ENCODE measurements at regions of chr15 and their contacts with region 1.

Region 1: GRCh38 chr15:58227706-58228543 is 89.7 kb downstream of the AQP9 start:
- DNase-seq: peak; percentile 48 to 69
- H3K4me3 ChIP-seq: no peak overlapping the region
- H3K27ac ChIP-seq: peak overlapping the region; percentile 32; the same call in 1 of the 2 replicates
- H3K4me1 ChIP-seq: peaks cover 25% of the 10 kb centered on the region
- H3K27me3 ChIP-seq: no peaks in the 10 kb centered on the region
- CTCF ChIP-seq: peak; percentile 87

Region 2: DNA sequence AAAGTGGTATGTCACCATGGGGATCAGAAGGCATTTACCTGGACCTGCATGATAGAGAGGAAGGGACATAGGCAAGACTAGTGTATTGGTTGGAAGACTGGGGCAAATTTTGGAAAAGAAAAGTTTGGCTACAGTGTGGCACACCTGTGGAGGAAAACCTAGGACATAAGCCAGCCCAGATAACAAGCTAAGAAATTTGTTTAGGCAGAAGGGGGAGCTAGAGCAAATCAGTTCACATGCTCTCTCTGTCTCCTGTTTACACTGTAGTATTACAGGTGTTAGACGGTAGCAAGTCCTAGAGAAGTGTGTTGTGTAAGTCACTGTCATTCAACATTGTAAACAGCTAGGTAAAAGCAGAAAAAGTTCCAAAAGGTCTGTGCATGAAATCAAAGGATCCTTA is 150.5 kb before region 1 on chr15:
- CTCF ChIA-PET with region 1: no interaction called
- POLR2A ChIA-PET with region 1: no interaction called
- intact Hi-C with region 1: no loop called
- DNase-seq: no peak
- H3K4me3 ChIP-seq: no peak overlapping the region
- H3K27ac ChIP-seq: no peak overlapping the region
- H3K4me1 ChIP-seq: no peaks in the 10 kb centered on the region
- H3K27me3 ChIP-seq: no peaks in the 10 kb centered on the region
- CTCF ChIP-seq: no peak; the same call in 1 of the 2 replicates

Region 3: GRCh38 chr15:58165661-58166060 is 62.3 kb before region 1 on chr15:
- CTCF ChIA-PET with region 1: no interaction called
- POLR2A ChIA-PET with region 1: no interaction called
- intact Hi-C with region 1: no loop called
- DNase-seq: no peak
- H3K4me3 ChIP-seq: no peak overlapping the region
- H3K27ac ChIP-seq: no peak overlapping the region
- H3K4me1 ChIP-seq: no peaks in the 10 kb centered on the region
- H3K27me3 ChIP-seq: no peaks in the 10 kb centered on the region
- CTCF ChIP-seq: no peak

Region 4: GRCh38 chr15:58247855-58248766 is 20.2 kb after region 1 on chr15:
- CTCF ChIA-PET with region 1: no interaction called
- POLR2A ChIA-PET with region 1: no interaction called
- intact Hi-C with region 1: no loop called
- DNase-seq: no peak
- H3K4me3 ChIP-seq: no peak overlapping the region
- H3K27ac ChIP-seq: no peak overlapping the region
- H3K4me1 ChIP-seq: no peaks in the 10 kb centered on the region; the same call in 1 of the 2 replicates
- H3K27me3 ChIP-seq: no peaks in the 10 kb centered on the region
- CTCF ChIP-seq: no peak

Region 5: GRCh38 chr15:58260911-58261267 is 33.0 kb after region 1 on chr15:
- CTCF ChIA-PET with region 1: no interaction called
- POLR2A ChIA-PET with region 1: interaction called, 4 read pairs
- intact Hi-C with region 1: loop called (anchors 2 kb)
- DNase-seq: peak; percentile 48 to 83
- H3K4me3 ChIP-seq: 0 out of 2 replicates have a peak overlapping the region, but pooled peaks have one; percentile 27
- H3K27ac ChIP-seq: peak overlapping the region; percentile 98
- H3K4me1 ChIP-seq: peaks cover 46% of the 10 kb centered on the region
- H3K27me3 ChIP-seq: no peaks in the 10 kb centered on the region
- CTCF ChIP-seq: no peak

Region 6: DNA sequence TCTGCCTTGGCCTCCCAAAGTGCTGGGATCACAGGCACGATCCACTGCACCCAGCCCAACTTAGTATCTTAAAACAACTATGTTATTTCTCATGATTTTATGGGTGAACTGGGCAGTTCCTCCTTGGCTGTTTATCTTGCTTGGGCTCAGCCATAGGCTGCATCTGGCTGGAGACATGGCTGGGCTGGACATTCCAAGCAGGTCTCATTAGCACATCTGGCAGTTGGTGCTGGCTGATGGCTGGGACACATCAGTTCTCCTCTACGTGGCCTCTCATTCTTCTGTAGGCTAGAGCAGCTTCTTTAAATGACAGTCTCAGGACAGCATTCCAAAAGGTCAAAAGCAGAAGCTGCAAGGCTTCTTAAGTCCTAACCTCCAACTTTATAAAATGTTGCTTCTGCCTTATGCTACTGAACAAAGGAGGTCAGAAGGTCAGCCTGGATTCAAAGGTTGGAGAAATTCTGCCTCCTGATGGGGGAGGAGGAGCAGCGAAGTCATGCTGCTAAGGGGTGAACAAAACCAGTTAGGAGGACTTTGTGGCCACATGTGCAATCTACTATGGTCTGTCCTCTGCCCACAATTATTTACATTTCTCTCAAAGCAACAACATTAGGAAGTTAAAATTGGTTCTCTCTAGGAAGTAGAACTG is 54.3 kb after region 1 on chr15:
- CTCF ChIA-PET with region 1: no interaction called
- POLR2A ChIA-PET with region 1: no interaction called
- intact Hi-C with region 1: no loop called
- DNase-seq: no peak
- H3K4me3 ChIP-seq: no peak overlapping the region
- H3K27ac ChIP-seq: no peak overlapping the region
- H3K4me1 ChIP-seq: 0 out of 2 replicates have a peak, but pooled peaks cover 4% of the 10 kb centered on the region
- H3K27me3 ChIP-seq: no peaks in the 10 kb centered on the region
- CTCF ChIP-seq: no peak

Region 7: DNA sequence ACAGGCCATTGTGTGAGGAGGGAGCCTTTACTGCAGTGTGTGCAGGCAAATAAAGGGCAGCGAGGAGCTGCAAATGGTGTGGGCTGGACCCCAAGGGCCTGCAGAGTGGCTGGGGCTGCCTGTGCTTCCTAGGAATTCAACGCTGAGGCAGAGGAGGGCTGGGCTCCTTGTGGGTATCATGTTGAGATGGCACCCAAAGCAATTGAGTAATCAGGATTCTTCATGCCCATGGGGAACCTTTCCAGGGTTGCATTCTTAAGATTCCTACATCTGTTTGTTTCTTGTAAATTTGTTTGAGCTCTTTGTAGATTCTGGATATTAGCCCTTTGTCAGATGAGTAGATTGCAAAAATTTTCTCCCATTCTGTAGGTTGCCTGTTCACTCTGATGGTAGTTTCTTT is 118.5 kb after region 1 on chr15:
- CTCF ChIA-PET with region 1: no interaction called
- POLR2A ChIA-PET with region 1: interaction called, 6 read pairs
- intact Hi-C with region 1: loop called (anchors 5 kb)
- DNase-seq: peak; percentile 84 to 91
- H3K4me3 ChIP-seq: no peak overlapping the region
- H3K27ac ChIP-seq: peak overlapping the region; percentile 51
- H3K4me1 ChIP-seq: peaks cover 23% of the 10 kb centered on the region
- H3K27me3 ChIP-seq: no peaks in the 10 kb centered on the region
- CTCF ChIP-seq: no peak

Region 8: DNA sequence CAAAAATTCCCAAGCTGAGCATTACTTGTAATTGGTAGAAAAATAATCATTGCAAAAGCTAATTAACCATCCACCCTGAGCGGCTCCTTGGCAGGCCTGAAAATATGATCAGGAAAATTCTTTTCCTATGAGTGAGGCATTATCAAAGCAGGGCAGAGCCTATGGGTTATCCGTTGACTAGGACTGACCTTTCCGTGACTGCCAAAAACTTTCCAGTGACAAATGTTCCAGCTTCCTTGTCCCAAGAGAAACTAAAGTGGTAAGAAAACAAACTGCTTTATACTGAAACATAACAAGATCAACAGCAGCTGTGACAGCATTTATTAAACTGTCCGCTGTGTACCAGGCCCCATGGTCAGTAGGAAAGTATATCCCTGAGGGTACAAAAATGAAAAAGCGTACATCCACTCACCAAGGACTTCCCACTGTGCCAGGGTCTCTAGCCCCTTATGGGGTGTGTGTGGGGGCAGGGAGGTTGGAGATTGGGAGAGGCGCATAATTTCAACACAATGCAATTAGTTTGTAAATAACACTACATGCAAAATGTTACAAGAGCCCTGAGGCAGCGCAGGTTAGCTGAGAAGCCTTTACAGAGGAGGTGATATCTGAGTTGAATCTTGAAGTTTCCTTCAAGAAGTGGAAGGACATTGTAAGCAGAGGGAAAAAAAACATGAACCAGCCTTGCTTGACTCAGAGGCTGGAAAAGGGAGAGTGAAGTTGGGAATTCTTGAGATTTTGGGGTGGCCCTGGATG is 212.4 kb after region 1 on chr15:
- CTCF ChIA-PET with region 1: no interaction called
- POLR2A ChIA-PET with region 1: no interaction called
- intact Hi-C with region 1: loop called (anchors 1 kb)
- DNase-seq: peak; percentile 43 to 94
- H3K4me3 ChIP-seq: peak overlapping the region; percentile 41; the same call in 1 of the 2 replicates
- H3K27ac ChIP-seq: peak overlapping the region; percentile 100
- H3K4me1 ChIP-seq: peaks cover 65% of the 10 kb centered on the region
- H3K27me3 ChIP-seq: no peaks in the 10 kb centered on the region
- CTCF ChIP-seq: no peak

Region 9: DNA sequence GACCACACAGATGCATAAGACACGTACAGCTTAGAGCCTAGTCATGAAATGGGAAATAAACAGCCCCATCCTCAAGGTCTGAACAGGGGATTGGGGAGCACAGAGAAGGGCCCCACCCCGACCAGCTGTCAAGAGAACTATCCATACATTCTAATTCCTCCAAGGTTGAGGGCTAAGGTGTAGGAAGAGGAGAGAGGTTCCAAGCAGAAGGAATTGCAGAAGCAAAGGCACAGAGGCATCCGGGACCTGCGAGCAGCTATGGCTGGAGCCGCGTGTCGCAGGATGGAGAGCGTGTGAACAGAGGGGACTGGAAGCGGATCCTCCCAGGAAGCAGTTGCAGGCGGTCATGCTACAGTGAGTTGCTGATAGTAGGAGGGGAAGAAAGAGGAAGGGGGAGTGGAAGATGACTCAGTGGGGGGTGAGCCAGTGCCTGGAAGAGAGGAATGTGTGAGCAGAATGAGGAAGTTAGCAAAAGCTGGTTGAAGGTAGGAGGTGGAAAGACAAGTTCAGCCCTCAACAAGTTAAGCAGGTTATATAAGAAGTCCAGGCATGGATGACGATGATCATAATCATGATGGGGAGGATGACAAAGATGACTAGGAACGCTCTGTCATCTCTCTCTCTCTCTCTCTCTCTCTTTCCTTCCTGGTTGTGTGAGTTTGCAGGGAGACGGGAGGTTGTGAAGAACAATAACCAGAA is 293.5 kb after region 1 on chr15:
- CTCF ChIA-PET with region 1: no interaction called
- POLR2A ChIA-PET with region 1: no interaction called
- intact Hi-C with region 1: loop called (anchors 5 kb)
- DNase-seq: peak; percentile 89 to 98
- H3K4me3 ChIP-seq: peak overlapping the region; percentile 49; the same call in 1 of the 2 replicates
- H3K27ac ChIP-seq: peak overlapping the region; percentile 97
- H3K4me1 ChIP-seq: peaks cover 50% of the 10 kb centered on the region
- H3K27me3 ChIP-seq: no peaks in the 10 kb centered on the region
- CTCF ChIP-seq: no peak

Region 10: DNA sequence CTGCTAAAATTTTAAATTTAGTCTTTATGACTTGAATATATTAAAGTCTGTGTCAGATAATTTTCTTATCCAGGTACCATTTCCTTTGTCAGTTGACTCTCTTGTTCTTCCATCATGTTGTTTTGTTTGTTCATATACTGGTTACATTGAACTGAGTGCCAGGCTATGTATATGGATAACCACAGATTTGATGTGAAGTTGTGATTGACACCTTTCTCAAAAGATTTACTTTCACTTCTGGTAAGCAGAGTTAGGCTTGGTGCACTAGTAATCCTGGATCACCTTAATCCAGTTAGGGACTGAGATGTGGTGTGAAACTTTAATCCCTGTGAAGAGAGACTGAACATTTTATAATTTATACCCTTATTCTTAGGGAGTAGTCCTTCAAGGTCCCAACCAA is 422.2 kb after region 1 on chr15:
- CTCF ChIA-PET with region 1: no interaction called
- POLR2A ChIA-PET with region 1: no interaction called
- intact Hi-C with region 1: loop called (anchors 10 kb)
- DNase-seq: no peak
- H3K4me3 ChIP-seq: no peak overlapping the region
- H3K27ac ChIP-seq: no peak overlapping the region
- H3K4me1 ChIP-seq: no peaks in the 10 kb centered on the region
- H3K27me3 ChIP-seq: no peaks in the 10 kb centered on the region
- CTCF ChIP-seq: no peak

Region 11: DNA sequence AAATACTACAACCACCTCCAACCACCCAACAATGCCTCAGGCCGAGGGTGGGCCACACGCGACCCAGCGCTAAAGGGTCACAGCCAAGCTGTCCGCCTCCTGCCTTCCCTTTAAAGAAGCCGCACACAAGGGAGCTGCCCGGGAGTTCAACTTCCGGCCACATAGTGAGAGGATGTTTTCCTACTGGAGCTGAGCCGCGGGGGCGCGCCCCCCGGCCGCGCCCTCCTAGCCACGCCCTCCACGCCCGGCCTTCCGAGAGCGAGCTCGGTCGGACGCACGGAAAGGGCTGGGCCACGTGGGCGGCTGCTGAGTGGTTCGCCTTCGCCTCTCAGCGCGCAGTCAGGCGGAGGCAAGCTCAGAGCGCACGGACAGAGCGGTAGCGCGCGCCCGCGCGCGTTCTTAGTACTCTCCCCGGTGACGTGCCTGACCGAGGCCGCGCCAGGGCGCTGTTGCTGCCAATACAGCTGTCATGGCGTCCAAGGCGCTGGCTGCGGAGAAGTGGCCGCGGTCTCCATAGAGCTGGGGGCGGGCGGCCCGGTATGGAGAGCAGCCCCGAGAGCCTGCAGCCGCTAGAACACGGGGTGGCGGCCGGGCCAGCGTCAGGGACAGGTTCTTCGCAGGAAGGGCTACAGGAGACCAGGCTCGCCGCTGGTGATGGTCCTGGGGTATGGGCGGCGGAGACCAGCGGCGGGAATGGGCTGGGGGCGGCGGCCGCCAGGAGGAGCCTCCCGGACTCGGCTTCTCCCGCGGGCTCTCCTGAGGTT is 543.1 kb after region 1 on chr15 and contains the start of gene MINDY2:
- CTCF ChIA-PET with region 1: no interaction called
- POLR2A ChIA-PET with region 1: no interaction called
- intact Hi-C with region 1: loop called (anchors 5 kb)
- DNase-seq: peak; percentile 92 to 97
- H3K4me3 ChIP-seq: peak within 1 kb of the TSS; percentile 80
- H3K27ac ChIP-seq: peak within 1 kb of the TSS; percentile 87
- H3K4me1 ChIP-seq: peaks cover 37% of the 10 kb centered on the region
- H3K27me3 ChIP-seq: no peaks in the 10 kb centered on the region
- CTCF ChIP-seq: no peak; the same call in 1 of the 2 replicates
- total RNA-seq, gene MINDY2: 18.4 and 22.8 TPM in 2 replicates

Measured in PC-9 (cell line).